Activated T-helper 1 cell treated with anti-CD3 and anti-CD28 coated beads, Interleukin-12 subunit alpha, Interleukin-12 subunit beta, Interleukin-2, Interleukin-4 antibody, amounts not matched to agents 30 ng/mL and 10 ng/mL and 1 ng/mL, durations not matched to agents 14 hours and 24 hours and 36 hours (primary cell): ENCODE measurements at regions of chr15 and their contacts with region 1.

Region 1: DNA sequence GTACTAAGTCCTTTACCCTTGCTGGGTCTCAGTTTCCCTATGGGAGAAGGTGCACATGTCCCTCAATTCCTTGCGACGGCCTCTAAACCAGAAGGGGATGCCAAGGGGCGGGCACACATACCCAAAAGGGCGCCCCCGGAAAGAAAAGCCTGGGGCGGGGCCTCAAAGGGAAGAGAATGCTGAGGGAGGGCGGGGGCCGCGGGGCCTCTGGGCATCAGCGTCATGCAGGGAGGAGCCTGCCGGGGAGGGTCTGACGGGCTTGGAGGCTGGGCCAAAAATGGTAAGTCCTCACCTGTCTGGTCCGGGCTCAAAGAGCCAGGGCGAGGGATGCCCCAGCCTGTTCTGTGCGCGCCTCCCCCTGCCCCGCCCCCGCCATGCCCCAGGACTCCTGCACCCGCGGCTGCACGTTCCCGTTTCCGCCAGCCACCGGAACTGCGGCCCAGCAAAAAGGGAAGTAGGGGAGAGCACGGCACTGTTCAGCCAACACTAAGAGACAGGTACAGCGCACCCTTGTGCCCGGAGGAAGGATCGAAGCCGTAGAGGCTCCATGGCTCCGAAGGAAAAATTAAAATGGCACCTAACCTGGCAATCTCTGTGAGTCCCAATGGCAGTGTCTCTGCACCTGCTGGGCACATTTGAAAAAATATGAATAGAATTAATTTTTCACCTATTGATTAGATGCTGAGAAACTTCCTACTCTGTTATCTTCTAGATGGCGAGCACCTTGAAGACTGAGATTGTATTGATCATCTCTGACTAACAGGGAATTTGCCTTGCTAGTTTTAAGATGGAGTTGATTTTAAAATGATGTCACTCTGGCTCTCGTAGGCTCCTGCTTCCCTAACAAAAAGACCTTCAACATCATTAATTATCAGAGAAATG is at the start of gene DET1:
- DNase-seq: peak; percentile 91
- H3K4me3 Mint-ChIP-seq: peak within 1 kb of the TSS; percentile 88
- H3K27ac Mint-ChIP-seq: peak within 1 kb of the TSS; percentile 85
- H3K4me1 Mint-ChIP-seq: peaks cover 9% of the 10 kb centered on the region
- H3K27me3 Mint-ChIP-seq: peaks cover 1% of the 10 kb centered on the region
- total RNA-seq, gene DET1: 1.4 and 1.9 TPM in 2 replicates

Region 2: DNA sequence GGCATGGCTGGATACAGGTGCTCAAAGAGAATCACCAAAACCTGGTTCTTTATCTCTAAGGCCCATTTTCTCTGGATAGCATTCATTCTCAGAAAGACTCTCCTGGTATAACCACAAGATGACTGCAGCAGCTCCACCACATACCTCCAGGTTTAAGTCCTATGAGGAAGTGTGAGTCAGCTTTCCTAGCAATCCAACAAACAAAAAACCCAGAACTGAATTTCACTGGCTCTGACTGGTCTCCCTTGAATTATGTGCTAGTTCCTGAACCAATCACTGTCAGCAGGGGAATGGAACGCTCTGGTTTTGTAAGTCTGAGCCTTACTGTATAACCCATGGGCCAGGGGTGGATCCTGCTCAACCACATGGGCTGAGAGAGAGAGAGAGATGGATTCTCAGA is 106.5 kb before region 1 on chr15:
- intact Hi-C with region 1: no loop called
- DNase-seq: no peak
- H3K4me3 Mint-ChIP-seq: no peak overlapping the region
- H3K27ac Mint-ChIP-seq: no peak overlapping the region
- H3K4me1 Mint-ChIP-seq: no peaks in the 10 kb centered on the region
- H3K27me3 Mint-ChIP-seq: peaks cover 23% of the 10 kb centered on the region

Region 3: DNA sequence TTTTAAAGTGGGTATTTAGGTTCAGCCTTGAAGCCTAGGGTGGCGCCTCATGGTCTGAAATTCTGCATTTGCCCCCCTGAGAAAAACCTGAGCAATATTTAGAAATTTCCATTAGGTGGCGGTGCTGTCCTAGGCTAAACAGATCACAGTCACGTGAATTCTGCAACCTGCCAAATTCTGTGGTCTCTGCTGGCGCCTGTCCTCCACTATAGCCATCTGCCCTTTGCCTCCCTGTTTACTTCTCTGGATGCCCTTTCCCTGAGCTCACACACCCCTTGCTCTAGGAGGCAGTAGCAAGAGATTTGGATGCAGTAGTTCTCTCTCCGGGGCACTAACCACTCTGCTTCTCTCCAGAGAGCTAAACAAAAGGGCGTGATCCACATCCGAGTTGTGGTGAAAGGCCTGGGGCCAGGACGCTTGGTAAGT is 69.8 kb before region 1 on chr15:
- intact Hi-C with region 1: loop called (anchors 2 kb)
- DNase-seq: no peak
- H3K4me3 Mint-ChIP-seq: no peak overlapping the region
- H3K27ac Mint-ChIP-seq: no peak overlapping the region
- H3K4me1 Mint-ChIP-seq: peaks cover 11% of the 10 kb centered on the region
- H3K27me3 Mint-ChIP-seq: no peaks in the 10 kb centered on the region

Region 4: GRCh38 chr15:88605189-88606069 is 58.9 kb after region 1 on chr15:
- intact Hi-C with region 1: loop called (anchors 5 kb)
- DNase-seq: no peak
- H3K4me3 Mint-ChIP-seq: no peak overlapping the region
- H3K27ac Mint-ChIP-seq: no peak overlapping the region
- H3K4me1 Mint-ChIP-seq: peaks cover 5% of the 10 kb centered on the region
- H3K27me3 Mint-ChIP-seq: peaks cover 67% of the 10 kb centered on the region